Right ventricle myocardium inferior (tissue), 1 donor: ENCODE measurements at regions of chr7 and their contacts with region 1.

Region 1: GRCh38 chr7:94183289-94183749 is 179.2 kb upstream of the BET1 start:
- DNase-seq: no peak
- ATAC-seq: peak; percentile 85

Region 2: DNA sequence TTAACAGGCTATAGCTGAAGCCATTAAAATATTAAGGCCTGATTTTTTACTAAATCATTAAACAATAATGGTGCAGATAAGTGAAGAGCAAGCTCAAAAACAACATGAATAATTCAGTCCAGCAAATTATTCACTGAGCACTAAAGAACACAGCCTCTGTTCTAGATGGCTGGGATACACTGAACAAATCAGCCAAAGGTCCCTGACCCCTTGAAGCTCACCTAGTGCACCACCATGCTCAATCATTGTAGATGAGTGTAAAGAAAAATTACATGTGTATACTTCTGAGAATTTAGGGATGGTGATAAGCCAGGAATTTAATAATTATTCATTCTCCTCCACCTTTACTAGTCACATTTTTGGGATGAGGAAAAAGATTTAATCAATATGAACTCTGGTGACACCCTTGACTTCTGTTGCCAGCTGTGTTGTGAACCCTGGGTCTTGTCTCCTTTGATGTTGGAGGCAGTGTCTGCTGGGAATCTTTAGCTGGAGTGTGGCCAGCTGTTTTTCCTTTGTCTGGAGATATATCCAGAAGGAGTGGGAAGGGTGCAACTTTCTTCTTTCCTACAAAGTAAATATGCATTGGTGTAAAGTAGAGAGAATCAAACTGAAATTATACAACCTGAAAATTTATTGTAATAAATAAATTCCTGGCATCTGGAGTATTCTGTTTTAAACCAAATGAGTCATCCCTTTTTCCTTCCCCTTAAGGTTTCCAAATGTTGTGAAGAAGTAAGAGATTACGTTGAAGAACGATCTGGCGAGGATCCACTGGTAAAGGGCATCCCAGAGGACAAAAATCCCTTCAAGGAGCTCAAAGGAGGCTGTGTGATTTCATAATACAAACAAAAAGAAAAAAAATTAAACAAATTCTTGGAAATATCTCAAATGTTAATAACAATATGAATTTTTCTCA is 273.0 kb before region 1 on chr7:
- intact Hi-C with region 1: loop called (anchors 5 kb)
- DNase-seq: no peak
- ATAC-seq: peak; percentile 87

Region 3: DNA sequence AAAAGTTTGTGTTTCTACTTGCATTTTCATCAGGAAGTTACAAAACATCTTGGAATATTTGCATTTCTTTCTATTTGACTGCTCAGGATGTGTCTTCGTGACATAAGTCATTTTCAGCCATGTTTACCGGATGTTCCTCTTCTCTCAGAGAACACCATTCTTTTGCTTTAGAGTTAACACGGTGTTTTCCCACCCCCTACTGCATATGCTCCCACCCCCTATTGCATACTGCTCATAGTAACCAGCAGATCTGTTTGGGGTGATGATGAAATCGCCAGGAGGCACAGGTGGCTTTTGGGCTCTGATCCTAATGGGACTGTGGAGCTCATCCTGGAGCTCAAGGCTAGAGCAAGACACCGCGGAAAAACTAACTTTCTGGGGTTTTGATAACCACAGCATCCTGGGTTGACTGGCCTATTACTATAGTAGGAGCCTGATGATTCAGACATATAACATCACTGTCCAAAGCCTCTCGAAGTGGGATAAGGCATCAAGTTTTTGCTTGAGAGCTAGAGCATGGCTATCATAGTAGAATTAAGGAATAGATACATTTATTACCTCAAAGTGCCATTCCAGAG is 114.1 kb before region 1 on chr7:
- intact Hi-C with region 1: no loop called
- DNase-seq: no peak
- ATAC-seq: no peak

Region 4: DNA sequence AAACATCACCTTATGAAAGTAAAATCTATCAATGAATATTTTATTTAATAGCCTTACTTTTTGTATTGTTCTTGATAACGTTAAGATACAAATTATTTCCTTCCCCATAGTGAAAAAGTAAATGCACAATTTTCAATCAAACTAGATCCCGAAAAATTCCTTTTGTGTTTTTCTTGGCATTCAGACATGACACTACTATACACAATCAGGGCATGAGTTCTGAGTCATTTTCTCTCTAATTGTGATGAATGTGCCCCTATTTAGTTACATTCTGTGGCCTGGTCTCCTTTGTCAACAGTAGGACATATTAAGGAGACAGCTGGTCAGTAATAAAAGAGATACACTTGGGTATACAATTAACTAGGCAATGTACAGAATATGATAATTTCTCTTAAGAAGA is 231.2 kb after region 1 on chr7:
- intact Hi-C with region 1: no loop called
- DNase-seq: no peak
- ATAC-seq: no peak